ENCODE measurements at regions of chr12 and their contacts with region 1.

Region 1: GRCh38 chr12:47837190-47838171 is 17.8 kb upstream of the HDAC7 start:
- DNase-seq: no peak
- H3K4me3 ChIP-seq: no peak overlapping the region
- H3K27me3 ChIP-seq: no peaks in the 10 kb centered on the region
- CTCF ChIP-seq: peak; percentile 81

Region 2: DNA sequence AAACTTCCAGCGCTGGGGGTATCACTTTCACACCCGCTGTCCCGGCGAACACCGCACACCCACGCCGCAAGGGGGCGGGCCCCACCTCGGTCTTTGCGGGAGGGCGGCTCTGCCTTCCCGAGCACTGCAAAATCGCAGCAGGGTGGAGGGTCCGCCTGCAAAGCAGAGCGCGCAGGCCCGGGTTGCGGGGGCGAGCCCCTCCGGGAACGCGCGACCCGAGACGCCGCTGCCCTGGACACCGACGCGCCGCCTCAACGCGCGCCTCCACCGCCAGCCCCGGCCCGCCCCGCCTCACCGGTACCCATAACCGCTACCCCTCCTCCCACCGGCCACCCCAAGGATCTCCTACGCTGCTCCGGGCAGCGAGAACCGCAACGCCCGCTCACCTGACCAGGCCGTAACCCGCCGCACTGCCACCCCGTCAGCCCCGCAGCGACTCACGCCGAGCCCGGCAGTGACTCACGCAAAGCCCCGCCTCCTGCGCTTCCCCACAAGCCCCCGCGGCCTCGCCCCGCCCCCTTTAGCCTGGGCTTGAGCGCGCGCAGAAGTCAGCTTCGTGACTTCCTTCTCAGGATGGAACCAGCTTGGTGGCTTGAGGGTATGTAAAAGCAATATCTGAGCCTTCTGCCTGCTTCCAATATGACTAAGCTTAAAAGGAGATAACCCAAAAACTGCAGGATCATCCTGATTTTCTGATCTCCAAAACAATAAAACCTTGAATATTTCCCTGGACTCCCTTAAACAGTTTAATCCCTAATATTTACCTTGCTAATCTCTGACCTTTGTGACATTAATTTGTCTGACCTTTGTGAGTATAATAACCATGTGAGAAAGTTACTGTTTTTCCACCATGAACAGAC is 131.7 kb before region 1 on chr12 and contains the start of gene RPAP3:
- CTCF ChIA-PET with region 1: interaction called, 26 read pairs
- POLR2A ChIA-PET with region 1: no interaction called
- DNase-seq: peak; percentile 57
- H3K4me3 ChIP-seq: peak within 1 kb of the TSS; percentile 95
- H3K27me3 ChIP-seq: no peaks in the 10 kb centered on the region
- CTCF ChIP-seq: peak; percentile 74
- polyA plus RNA-seq, gene RPAP3: 6.1 and 15.6 TPM in 2 replicates

Region 3: DNA sequence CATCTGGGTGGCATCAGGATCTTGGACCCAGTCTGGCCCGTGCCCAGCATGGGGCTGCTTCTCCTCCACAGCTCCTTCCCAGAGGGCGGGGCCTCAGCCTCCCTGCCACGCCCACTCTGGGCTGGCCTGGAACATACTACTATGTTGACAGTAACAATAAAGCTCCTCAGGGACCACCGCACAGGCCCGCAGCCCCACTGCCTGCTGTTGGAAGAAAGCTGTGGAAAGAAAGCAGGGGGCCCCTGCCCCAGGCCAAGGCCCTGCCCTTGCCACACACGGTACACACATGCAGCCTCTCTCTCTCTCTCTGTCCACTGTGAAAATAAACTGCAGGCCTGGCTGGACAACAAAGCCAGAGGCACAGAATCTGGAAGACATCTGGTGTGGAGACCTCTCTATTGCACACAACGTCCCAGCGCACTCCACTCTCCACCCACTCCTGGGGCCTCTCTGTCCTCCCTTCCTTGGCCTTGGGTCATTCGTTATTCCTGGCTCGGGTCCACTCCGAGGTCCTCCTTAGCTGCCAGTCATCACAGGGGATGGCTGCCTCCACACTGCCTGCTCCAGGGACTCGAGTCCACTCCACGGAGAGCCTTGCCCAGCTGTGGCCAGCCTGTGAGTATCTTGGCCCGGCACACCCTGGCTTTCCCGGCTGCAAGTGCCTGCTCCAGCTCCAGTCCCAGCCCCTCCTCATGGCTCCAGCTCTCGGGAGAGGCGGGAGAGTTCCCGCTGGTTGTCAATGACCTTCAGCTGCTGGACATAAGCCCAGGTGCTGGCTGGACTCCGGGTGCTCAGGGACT is 100.4 kb before region 1 on chr12:
- CTCF ChIA-PET with region 1: interaction called, 248 read pairs
- POLR2A ChIA-PET with region 1: interaction called, 7 read pairs
- DNase-seq: no peak
- H3K4me3 ChIP-seq: no peak overlapping the region
- H3K27me3 ChIP-seq: peaks cover 3% of the 10 kb centered on the region; the same call in 1 of the 2 replicates
- CTCF ChIP-seq: no peak

Region 4: GRCh38 chr12:47758834-47759690 is 78.4 kb before region 1 on chr12 and contains the start of gene RAPGEF3:
- CTCF ChIA-PET with region 1: interaction called, 18 read pairs
- POLR2A ChIA-PET with region 1: no interaction called
- DNase-seq: no peak
- H3K4me3 ChIP-seq: peak within 1 kb of the TSS; percentile 53
- H3K27me3 ChIP-seq: no peaks in the 10 kb centered on the region
- CTCF ChIP-seq: peak; percentile 65
- polyA plus RNA-seq, gene RAPGEF3: 1.3 and 2.4 TPM in 2 replicates

Region 5: DNA sequence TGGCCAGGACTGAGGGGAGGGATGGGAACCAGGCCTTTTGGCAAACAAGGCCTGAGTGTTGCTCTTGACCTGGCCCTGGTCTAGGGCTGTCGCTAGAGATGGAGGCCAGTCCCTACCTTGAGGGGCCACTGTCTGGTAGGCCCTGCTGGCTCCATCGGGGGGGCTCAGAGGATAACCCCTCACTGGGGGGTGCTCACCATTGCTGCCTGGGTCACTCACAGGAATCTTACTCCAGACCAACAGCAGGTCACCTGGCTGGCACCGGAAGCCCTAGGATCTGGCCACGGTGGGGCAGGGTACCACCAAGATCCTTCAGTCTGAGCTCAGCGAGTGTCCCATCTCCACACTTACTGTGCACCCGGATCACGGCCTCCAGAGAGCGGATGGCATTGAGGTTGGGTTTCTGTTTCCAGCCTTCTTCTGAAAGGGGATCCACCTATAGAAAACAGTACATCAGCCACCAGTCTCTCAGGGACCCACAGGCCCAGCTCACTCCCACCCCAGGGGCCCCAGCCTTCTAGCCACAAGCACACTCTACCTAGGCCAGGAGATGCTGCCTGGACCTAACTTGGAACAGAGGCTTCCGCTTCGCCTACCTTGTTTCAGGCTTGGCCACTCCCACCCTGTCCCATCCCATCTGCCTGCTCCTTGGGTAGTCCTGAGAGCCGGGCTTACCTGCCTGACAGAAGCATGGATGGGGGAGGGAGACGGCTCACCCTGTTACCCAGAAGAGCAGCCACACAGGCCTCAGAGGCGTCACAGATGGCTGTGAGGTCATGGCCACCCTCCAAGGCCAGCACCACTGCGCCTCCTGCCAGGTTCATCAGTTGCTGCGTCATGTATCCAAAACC is 52.2 kb before region 1 on chr12:
- CTCF ChIA-PET with region 1: interaction called, 163 read pairs
- POLR2A ChIA-PET with region 1: no interaction called
- DNase-seq: no peak
- H3K4me3 ChIP-seq: no peak overlapping the region
- H3K27me3 ChIP-seq: no peaks in the 10 kb centered on the region
- CTCF ChIP-seq: no peak

Region 6: DNA sequence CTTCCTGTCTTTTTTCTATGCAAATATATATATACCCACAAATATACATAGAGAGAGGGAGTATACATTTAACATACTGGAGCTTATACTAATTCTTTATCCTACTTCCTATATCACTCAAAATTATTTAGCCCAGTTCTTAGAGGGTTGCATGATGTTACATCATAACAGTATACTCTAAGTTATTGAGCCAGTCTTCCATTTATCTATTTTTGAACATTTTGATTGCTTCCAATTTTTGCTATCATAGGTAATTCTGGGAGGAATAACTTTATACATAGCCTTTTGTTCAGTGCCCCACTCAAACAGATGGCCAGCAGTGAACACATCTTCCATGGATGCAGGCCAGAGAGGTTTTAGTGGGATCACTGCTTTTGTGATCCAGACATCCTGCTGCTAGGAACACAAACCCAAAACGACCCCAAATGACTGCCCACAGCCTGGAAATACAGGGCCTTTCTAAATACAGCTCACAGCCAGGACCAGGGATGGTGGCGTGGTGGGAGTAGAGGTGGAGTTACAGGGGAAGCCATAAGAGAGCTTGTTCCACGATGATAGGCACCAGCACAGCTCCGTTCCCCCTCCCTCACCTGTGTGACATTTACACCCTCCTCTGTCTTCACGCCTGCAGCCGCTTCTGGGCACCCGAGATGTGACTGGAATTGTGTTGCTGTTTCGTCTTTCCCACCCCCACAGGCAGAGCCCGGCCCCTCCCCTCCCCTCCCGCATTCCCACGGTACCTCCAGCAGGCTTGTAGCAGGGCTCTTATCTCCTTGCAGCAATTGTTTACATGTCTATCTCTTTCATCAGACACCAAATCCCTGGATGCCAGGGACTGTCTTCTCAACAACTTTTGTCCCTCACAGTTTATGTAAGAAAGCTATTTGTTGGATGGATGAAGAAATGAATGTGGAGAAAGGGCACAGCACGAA is 12.9 kb after region 1 on chr12:
- CTCF ChIA-PET with region 1: interaction called, 18 read pairs
- POLR2A ChIA-PET with region 1: no interaction called
- DNase-seq: no peak
- H3K4me3 ChIP-seq: no peak overlapping the region
- H3K27me3 ChIP-seq: no peaks in the 10 kb centered on the region
- CTCF ChIP-seq: no peak

Region 7: GRCh38 chr12:48118284-48118890 is 280.9 kb after region 1 on chr12:
- CTCF ChIA-PET with region 1: no interaction called
- POLR2A ChIA-PET with region 1: no interaction called
- DNase-seq: no peak
- H3K4me3 ChIP-seq: no peak overlapping the region
- H3K27me3 ChIP-seq: peaks cover 1% of the 10 kb centered on the region; the same call in 1 of the 2 replicates
- CTCF ChIP-seq: no peak

Region 8: GRCh38 chr12:48810903-48811431 is 973.5 kb after region 1 on chr12:
- CTCF ChIA-PET with region 1: no interaction called
- POLR2A ChIA-PET with region 1: no interaction called
- DNase-seq: peak; percentile 78
- H3K4me3 ChIP-seq: no peak overlapping the region
- H3K27me3 ChIP-seq: no peaks in the 10 kb centered on the region
- CTCF ChIP-seq: no peak

Measured in BJ (cell line).